ENCODE measurements at regions of chr13 and their contacts with region 1.

Region 1: DNA sequence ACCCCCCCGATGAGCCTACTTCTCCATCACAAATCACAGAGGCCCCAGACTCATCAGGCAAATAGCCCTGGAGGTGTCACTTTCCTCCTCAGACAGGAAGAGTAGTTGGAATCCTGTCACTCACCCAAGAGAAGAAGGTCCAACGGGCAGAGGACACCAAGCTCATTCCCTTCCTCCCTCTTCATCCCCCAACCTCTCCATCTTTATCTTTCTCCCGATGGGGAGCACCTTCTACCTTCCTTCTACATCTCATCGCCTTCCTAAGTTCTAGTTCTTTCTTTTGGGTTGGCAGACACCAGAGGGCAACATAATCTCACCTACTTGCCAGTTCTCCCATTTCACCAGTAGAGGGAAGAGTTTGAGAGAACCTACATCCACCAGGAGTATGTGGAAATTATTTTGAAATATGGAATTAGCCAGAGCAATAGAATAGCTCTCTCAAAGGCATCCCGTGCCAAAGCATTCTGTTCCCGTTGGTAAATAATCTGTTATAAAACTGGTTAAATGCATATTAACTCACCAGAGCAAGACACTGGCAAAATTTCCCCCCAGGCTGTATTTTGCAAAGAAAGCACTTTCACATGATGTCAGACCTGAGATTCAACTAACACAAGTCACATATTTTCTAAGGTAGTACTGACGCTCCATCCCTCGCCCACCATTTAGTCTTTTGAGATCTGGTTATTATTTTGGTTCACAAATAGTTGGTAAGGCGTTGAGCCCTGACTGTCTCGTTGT is 55.0 kb downstream of the ZIC5 start:
- DNase-seq: no peak
- ATAC-seq: peak; percentile 88
- H3K4me3 Mint-ChIP-seq: no peak overlapping the region
- H3K27ac Mint-ChIP-seq: no peak overlapping the region
- H3K4me1 Mint-ChIP-seq: peaks cover 31% of the 10 kb centered on the region
- H3K27me3 Mint-ChIP-seq: no peaks in the 10 kb centered on the region; the same call in 1 of the 2 replicates
- CTCF ChIP-seq: peak; percentile 51

Region 2: DNA sequence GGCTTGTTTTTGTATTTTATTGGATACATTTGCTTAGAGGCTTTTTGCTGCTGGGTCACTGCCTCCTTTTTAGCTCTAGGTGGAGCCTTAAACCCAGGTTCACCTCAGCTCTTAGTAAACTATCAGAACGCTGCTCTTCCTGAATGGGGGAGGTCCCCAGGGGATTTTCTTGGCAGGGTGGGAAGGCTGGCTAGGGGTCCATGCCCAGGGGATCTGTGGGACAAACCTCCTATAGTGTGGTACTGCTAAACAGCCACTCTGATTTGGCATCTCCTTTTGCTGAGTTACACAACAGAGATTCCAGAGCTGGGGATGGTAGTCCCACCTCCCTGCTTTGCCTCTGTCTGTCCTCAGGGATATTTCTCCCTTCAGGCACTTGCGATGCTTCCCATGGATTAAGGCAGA is 149.9 kb before region 1 on chr13:
- CTCF ChIA-PET with region 1: interaction called, 15 read pairs
- POLR2A ChIA-PET with region 1: no interaction called
- DNase-seq: peak; percentile 22
- ATAC-seq: peak; percentile 90
- H3K4me3 Mint-ChIP-seq: no peak overlapping the region
- H3K27ac Mint-ChIP-seq: peak overlapping the region; percentile 80
- H3K4me1 Mint-ChIP-seq: peaks cover 31% of the 10 kb centered on the region
- H3K27me3 Mint-ChIP-seq: no peaks in the 10 kb centered on the region; the same call in 1 of the 2 replicates
- CTCF ChIP-seq: 0 out of 2 replicates have a peak, but pooled peaks have one; percentile 21

Region 3: GRCh38 chr13:99893567-99893966 is 23.0 kb before region 1 on chr13:
- CTCF ChIA-PET with region 1: no interaction called
- POLR2A ChIA-PET with region 1: no interaction called
- DNase-seq: no peak
- ATAC-seq: no peak
- H3K4me3 Mint-ChIP-seq: peak overlapping the region; percentile 41
- H3K27ac Mint-ChIP-seq: no peak overlapping the region
- H3K4me1 Mint-ChIP-seq: peaks cover 68% of the 10 kb centered on the region
- H3K27me3 Mint-ChIP-seq: peaks cover 46% of the 10 kb centered on the region
- CTCF ChIP-seq: no peak

Region 4: DNA sequence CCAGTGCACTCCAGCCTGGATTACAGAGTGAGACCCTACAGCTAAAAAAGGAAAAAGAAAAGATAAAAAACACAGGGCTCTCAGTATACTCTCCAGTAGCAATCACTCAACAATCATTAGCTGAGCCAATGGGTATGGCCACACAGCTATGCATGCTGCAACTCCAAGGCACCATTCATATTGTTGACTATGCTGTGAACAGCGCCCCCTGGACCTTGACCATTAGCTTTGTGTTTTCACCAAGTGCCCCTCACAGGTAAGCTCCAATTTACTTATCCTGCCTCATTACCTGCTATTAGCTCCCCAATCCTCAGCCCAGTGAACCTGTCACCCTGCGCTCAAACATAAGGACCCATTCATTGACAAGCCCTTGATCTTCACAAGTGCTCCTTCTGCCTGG is 19.2 kb after region 1 on chr13:
- CTCF ChIA-PET with region 1: interaction called, 27 read pairs
- POLR2A ChIA-PET with region 1: no interaction called
- DNase-seq: peak; percentile 56
- ATAC-seq: peak; percentile 60
- H3K4me3 Mint-ChIP-seq: no peak overlapping the region
- H3K27ac Mint-ChIP-seq: no peak overlapping the region
- H3K4me1 Mint-ChIP-seq: peaks cover 10% of the 10 kb centered on the region
- H3K27me3 Mint-ChIP-seq: no peaks in the 10 kb centered on the region; the same call in 1 of the 2 replicates
- CTCF ChIP-seq: peak; percentile 25; the same call in 1 of the 2 replicates

Region 5: GRCh38 chr13:100443998-100444328 is 527.4 kb after region 1 on chr13:
- CTCF ChIA-PET with region 1: no interaction called
- POLR2A ChIA-PET with region 1: no interaction called
- DNase-seq: no peak
- ATAC-seq: no peak
- H3K4me3 Mint-ChIP-seq: no peak overlapping the region
- H3K27ac Mint-ChIP-seq: peak overlapping the region; percentile 17; the same call in 1 of the 2 replicates
- H3K4me1 Mint-ChIP-seq: peaks cover 42% of the 10 kb centered on the region
- H3K27me3 Mint-ChIP-seq: no peaks in the 10 kb centered on the region
- CTCF ChIP-seq: no peak

Measured in WTC11 (cell line).